ENCODE measurements at regions of chr1 and their contacts with region 1.

Region 1: DNA sequence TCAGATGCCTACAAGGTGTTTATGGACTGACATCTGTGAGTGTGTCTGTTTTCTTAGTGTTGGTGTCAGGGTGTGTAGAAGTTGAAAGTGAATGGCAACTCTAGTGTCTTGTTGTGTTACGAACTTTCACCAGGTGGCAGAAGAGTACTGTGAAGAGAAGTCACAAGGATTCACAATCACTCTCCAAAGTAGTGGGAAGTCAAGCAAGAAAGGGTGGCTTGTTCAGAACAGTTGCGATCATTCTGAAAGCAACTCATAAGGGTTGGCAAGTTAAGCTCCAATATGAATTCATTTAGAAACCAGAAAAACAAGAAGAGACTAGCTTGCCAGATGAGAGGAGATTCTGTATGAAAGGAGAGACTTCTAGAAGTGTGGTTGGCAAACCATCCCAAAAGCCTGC is 86.1 kb downstream of the FASLG start:
- DNase-seq: peak in 7 of 9 donors; percentile 44 to 72 (median 65)
- ATAC-seq: peak; percentile 79
- H3K4me3 ChIP-seq: no peak overlapping the region
- H3K4me3 Mint-ChIP-seq: peak overlapping the region in 9 of 10 donors; percentile 2 to 78 (median 63)
- H3K27ac ChIP-seq: no peak overlapping the region
- H3K27ac Mint-ChIP-seq: peak overlapping the region in 6 of 9 donors; percentile 14 to 90 (median 80)
- H3K4me1 ChIP-seq: peaks cover 28 to 38% of the 10 kb centered on the region in 2 donors
- H3K4me1 Mint-ChIP-seq: peaks cover 31 to 58% (median 54%) of the 10 kb centered on the region in 7 donors
- H3K27me3 ChIP-seq: no peaks in the 10 kb centered on the region
- H3K27me3 Mint-ChIP-seq: peaks cover 0 to 52% (median 0%) of the 10 kb centered on the region in 5 donors

Region 2: DNA sequence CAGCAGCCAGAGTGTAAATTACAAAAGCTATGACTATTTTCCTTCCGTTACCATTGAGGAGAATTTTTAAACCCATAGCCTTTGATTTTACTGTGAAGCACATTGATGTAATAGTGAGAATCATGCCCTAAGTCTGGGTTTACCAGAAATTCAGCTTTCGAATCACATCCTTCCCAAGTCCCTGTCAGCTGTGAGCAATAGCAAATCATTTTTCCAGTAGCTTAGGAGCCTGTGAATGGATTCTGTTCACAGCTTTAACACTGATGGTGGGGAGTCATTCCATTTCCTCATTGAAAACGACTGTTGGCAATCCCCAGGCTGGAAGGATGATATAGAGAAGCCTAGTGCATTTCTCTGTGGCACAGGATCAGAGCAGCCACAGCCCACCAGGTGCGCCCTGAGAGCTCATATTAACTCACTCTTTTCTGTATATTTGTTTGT is 406.7 kb before region 1 on chr1:
- CTCF ChIA-PET with region 1: no interaction called
- POLR2A ChIA-PET with region 1: no interaction called
- intact Hi-C with region 1: no loop called
- DNase-seq: peak in 1 of 9 donors; percentile 48
- ATAC-seq: no peak
- H3K4me3 ChIP-seq: no peak overlapping the region
- H3K4me3 Mint-ChIP-seq: peak overlapping the region in 1 of 10 donors; percentile 10
- H3K27ac ChIP-seq: no peak overlapping the region
- H3K27ac Mint-ChIP-seq: peak overlapping the region in 1 of 9 donors; percentile 42
- H3K4me1 ChIP-seq: peaks cover 0 to 4% of the 10 kb centered on the region in 2 donors
- H3K4me1 Mint-ChIP-seq: peaks cover 2 to 45% (median 7%) of the 10 kb centered on the region in 7 donors
- H3K27me3 ChIP-seq: no peaks in the 10 kb centered on the region
- H3K27me3 Mint-ChIP-seq: no peaks in the 10 kb centered on the region

Region 3: DNA sequence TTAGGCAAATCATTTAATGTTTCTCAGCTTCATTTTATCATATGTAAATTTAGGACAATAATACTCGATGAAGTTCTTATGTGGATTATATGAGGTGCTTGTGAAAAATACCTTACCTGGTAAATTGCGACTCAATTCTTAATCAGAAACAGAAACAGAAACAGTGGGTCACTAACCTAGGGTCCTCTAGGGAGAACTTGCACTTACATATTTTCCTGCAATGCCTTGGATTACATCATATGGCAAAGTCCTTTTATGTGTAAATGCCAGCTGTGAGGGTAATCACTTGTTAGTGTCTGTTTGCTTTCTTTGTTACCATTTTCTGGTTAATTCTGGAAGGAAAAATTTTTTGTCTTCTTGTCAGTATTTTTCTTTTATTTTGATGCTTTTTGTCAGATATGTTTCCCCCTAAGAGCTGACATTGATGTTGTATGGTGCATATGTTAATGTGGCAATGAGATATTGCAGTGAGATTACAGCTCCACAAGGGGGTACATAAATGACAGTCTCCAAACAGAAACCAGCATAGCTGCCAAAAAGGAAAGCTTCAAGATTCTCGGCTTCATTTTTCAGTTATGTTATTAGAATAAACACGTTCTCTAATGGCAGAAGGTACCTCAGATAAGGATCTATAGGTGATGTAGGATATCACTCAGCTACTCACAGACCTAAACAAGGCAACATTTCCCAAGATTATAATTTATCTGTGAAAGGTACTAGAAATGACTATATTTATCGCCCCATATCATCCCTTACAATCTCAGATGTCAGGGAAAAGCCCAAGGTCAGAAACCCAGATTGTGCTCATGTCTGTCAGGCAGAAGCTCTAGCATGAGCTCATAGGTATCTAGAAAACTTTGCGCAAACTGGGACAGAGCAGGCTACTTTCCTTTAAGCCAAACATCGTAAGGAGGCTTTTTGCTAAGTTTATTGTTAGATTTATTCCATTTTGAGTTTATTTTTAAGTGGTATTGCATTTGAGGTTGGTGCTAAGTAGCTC is 33.7 kb after region 1 on chr1:
- CTCF ChIA-PET with region 1: interaction called, 9 read pairs
- POLR2A ChIA-PET with region 1: interaction called, 4 read pairs
- intact Hi-C with region 1: loop called in 1 of 2 experiments (anchors 1 kb)
- DNase-seq: peak in 6 of 9 donors; percentile 8 to 32 (median 18)
- ATAC-seq: peak; percentile 74
- H3K4me3 ChIP-seq: peak overlapping the region; percentile 17
- H3K4me3 Mint-ChIP-seq: peak overlapping the region in 9 of 10 donors; percentile 23 to 72 (median 51)
- H3K27ac ChIP-seq: no peak overlapping the region
- H3K27ac Mint-ChIP-seq: peak overlapping the region in 5 of 9 donors; percentile 1 to 48 (median 41)
- H3K4me1 ChIP-seq: peaks cover 0 to 9% of the 10 kb centered on the region in 2 donors
- H3K4me1 Mint-ChIP-seq: peaks cover 8 to 30% (median 17%) of the 10 kb centered on the region in 7 donors
- H3K27me3 ChIP-seq: no peaks in the 10 kb centered on the region
- H3K27me3 Mint-ChIP-seq: peaks cover 0 to 18% (median 0%) of the 10 kb centered on the region in 5 donors

Region 4: DNA sequence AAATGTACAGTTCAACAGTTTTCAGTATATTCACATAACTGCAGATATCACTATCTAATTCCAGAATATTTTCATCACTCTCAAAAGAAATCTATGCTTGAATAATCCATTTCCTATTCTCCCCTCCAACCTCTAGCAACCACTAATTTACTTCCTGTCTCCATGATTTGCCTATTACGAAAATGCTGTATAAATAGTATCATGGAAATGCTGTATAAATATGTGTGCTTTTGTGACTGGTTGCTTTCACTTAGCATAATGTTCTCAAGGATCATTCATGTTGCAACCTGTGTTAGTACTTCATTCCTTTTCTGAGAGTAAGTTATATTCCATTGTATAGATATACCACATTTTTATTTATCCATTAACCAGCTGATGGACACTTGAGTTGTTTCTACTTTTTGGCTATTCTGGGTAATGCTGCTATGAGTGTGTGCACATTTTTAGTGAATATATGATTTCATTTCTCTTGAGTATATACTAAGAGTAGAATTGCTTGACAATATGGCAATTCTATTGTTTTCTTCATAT is 190.1 kb after region 1 on chr1:
- CTCF ChIA-PET with region 1: no interaction called
- POLR2A ChIA-PET with region 1: no interaction called
- intact Hi-C with region 1: no loop called
- DNase-seq: no peak
- ATAC-seq: no peak
- H3K4me3 ChIP-seq: no peak overlapping the region
- H3K4me3 Mint-ChIP-seq: no peak overlapping the region
- H3K27ac ChIP-seq: no peak overlapping the region
- H3K27ac Mint-ChIP-seq: no peak overlapping the region
- H3K4me1 ChIP-seq: no peaks in the 10 kb centered on the region
- H3K4me1 Mint-ChIP-seq: peaks cover 4 to 20% (median 6%) of the 10 kb centered on the region in 7 donors
- H3K27me3 ChIP-seq: no peaks in the 10 kb centered on the region
- H3K27me3 Mint-ChIP-seq: peaks cover 0 to 6% (median 0%) of the 10 kb centered on the region in 5 donors

Region 5: DNA sequence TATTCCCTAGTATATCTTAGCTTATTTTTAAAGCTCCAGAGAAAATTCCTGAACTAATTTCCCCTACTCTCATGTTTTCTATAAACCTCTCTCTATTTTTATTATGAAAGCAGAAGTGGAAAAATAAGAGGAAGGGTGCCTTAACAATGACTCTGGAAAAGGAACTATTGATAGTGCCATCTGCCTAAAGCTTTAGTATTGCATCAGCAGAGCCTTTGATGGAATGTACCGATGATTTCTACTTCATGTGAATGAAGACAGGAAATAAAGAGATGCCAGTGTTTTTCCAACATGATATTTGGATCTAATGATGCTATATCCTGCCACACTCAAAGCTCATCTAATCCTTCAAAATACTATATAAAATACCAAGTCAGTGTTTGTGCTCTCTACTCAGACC is 270.6 kb after region 1 on chr1:
- CTCF ChIA-PET with region 1: no interaction called
- POLR2A ChIA-PET with region 1: no interaction called
- intact Hi-C with region 1: loop called in 1 of 2 experiments (anchors 5 kb)
- DNase-seq: no peak
- ATAC-seq: no peak
- H3K4me3 ChIP-seq: no peak overlapping the region
- H3K4me3 Mint-ChIP-seq: no peak overlapping the region
- H3K27ac ChIP-seq: no peak overlapping the region
- H3K27ac Mint-ChIP-seq: no peak overlapping the region
- H3K4me1 ChIP-seq: no peaks in the 10 kb centered on the region
- H3K4me1 Mint-ChIP-seq: peaks cover 0 to 7% (median 0%) of the 10 kb centered on the region in 7 donors
- H3K27me3 ChIP-seq: no peaks in the 10 kb centered on the region
- H3K27me3 Mint-ChIP-seq: peaks cover 0 to 12% (median 6%) of the 10 kb centered on the region in 5 donors

Region 6: GRCh38 chr1:173269490-173270230 is 524.6 kb after region 1 on chr1:
- CTCF ChIA-PET with region 1: no interaction called
- POLR2A ChIA-PET with region 1: no interaction called
- intact Hi-C with region 1: loop called in 1 of 2 experiments (anchors 2 kb)
- DNase-seq: no peak
- ATAC-seq: no peak
- H3K4me3 ChIP-seq: no peak overlapping the region
- H3K4me3 Mint-ChIP-seq: no peak overlapping the region
- H3K27ac ChIP-seq: no peak overlapping the region
- H3K27ac Mint-ChIP-seq: no peak overlapping the region
- H3K4me1 ChIP-seq: no peaks in the 10 kb centered on the region
- H3K4me1 Mint-ChIP-seq: peaks cover 0 to 3% (median 0%) of the 10 kb centered on the region in 7 donors
- H3K27me3 ChIP-seq: no peaks in the 10 kb centered on the region
- H3K27me3 Mint-ChIP-seq: peaks cover 0 to 3% (median 0%) of the 10 kb centered on the region in 5 donors

Region 7: DNA sequence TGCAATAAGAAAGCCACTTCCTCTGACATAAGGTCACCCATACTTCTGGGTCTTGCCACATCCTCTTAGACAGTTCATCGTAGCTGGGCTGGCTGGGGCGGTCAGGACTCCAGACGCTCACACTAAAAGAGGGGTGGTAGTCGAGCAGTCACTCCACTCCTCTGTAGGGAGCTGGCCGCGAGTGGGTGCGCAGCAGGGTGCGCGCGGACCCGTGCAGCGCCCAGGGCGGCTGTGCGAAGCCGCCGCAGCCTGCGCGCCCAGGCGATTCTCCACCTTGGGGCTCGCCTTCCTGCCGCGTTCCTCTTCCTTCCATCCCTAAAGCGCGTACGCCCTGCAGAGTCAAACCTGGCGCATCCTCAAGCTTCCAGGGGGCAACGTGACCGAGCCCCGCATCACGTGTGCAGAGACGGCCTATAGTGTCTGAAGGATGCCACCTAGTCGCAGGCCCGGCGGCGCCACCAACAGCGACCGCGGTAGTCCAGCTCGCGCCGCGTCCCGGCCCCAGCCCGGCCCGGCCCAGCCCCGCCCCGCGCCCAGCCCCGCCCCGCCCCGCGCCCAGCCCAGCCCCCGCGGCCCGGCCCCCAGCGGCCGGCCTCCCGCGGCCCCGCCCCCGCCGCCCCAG is 731.8 kb after region 1 on chr1:
- CTCF ChIA-PET with region 1: no interaction called
- POLR2A ChIA-PET with region 1: no interaction called
- intact Hi-C with region 1: loop called in 1 of 2 experiments (anchors 2 kb)
- DNase-seq: peak; percentile 65 to 82 (median 78)
- ATAC-seq: peak; percentile 87
- H3K4me3 ChIP-seq: peak overlapping the region; percentile 92
- H3K4me3 Mint-ChIP-seq: peak overlapping the region; percentile 82 to 94 (median 91)
- H3K27ac ChIP-seq: peak overlapping the region; percentile 78
- H3K27ac Mint-ChIP-seq: peak overlapping the region; percentile 61 to 96 (median 89)
- H3K4me1 ChIP-seq: peaks cover 20 to 31% of the 10 kb centered on the region in 2 donors
- H3K4me1 Mint-ChIP-seq: peaks cover 38 to 72% (median 63%) of the 10 kb centered on the region in 7 donors
- H3K27me3 ChIP-seq: no peaks in the 10 kb centered on the region
- H3K27me3 Mint-ChIP-seq: no peaks in the 10 kb centered on the region

Region 8: DNA sequence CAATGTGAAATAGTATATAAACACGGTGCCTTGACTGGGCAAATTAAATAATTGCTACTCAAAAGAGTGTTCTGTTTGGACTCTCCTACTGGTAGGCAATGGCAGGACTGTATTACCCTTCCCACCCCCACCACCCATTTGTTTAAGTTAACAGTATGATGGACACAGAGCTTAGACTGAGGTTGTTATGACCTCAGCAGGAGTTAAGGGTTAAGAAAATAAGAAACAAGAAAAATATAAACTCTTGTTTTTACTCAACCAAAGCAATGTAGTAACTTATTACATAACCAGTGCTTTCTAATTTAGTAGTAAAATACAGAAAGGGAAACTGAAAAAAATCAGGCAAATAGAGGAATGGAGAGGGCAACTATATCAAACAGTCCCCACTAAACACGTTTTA is 1192.0 kb after region 1 on chr1:
- CTCF ChIA-PET with region 1: no interaction called
- POLR2A ChIA-PET with region 1: no interaction called
- intact Hi-C with region 1: loop called in 1 of 2 experiments (anchors 10 kb)
- DNase-seq: no peak
- ATAC-seq: no peak
- H3K4me3 ChIP-seq: no peak overlapping the region
- H3K4me3 Mint-ChIP-seq: no peak overlapping the region
- H3K27ac ChIP-seq: no peak overlapping the region
- H3K27ac Mint-ChIP-seq: no peak overlapping the region
- H3K4me1 ChIP-seq: no peaks in the 10 kb centered on the region
- H3K4me1 Mint-ChIP-seq: peaks cover 0 to 4% (median 0%) of the 10 kb centered on the region in 7 donors
- H3K27me3 ChIP-seq: no peaks in the 10 kb centered on the region
- H3K27me3 Mint-ChIP-seq: no peaks in the 10 kb centered on the region

Region 9: DNA sequence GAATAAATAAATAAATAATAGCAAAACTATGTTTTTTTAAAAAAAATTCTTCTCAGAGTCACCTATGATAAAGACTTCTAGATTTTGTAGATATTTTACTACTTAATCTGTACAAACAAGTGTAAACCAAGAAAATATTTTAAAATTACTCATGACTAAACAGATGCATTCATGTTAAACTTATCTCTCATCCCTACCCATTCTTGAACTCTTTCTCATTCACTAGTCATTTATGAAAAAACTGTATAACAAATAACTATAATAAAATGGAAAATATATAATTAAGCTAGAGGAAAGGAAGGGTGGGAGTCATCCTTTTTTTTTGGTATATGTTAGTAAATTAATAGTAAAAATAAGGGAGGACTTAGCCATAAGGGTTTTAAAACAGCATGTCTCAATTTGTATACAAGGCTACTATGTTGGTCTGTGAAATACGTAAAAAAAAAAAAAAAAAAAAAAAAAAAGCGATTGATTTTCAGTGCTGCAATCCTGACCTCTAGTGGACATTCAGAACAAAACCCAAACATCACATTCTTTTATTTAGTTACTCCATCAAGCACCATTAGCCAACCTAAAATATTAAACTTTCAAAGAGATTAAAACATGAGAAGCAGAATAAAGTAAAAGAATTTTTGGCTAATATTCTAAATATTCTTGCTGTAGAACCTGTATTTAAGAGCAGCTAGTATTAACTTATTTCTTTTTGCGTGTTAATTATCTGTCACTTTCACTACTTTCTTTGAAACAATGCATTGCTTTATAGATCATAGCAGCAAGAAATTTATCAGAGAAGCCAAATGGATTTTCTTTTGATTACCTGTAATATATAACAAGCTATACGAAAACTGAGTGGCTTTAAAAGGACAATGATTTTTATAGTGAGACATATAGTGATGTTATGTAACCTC is 1998.9 kb after region 1 on chr1:
- CTCF ChIA-PET with region 1: no interaction called
- POLR2A ChIA-PET with region 1: no interaction called
- intact Hi-C with region 1: loop called (anchors 1 to 5 kb)
- DNase-seq: peak in 5 of 9 donors; percentile 29 to 53 (median 36)
- ATAC-seq: peak; percentile 47
- H3K4me3 ChIP-seq: no peak overlapping the region
- H3K4me3 Mint-ChIP-seq: no peak overlapping the region
- H3K27ac ChIP-seq: no peak overlapping the region
- H3K27ac Mint-ChIP-seq: no peak overlapping the region
- H3K4me1 ChIP-seq: no peaks in the 10 kb centered on the region
- H3K4me1 Mint-ChIP-seq: peaks cover 0 to 18% (median 13%) of the 10 kb centered on the region in 7 donors
- H3K27me3 ChIP-seq: no peaks in the 10 kb centered on the region
- H3K27me3 Mint-ChIP-seq: peaks cover 0 to 5% (median 0%) of the 10 kb centered on the region in 5 donors